ENCODE measurements at regions of chr21 and their contacts with region 1.

Region 1: GRCh38 chr21:15586752-15587445 is 142.9 kb upstream of the USP25 start:
- DNase-seq: no peak
- ATAC-seq: no peak
- H3K4me3 ChIP-seq: no peak overlapping the region
- H3K27ac ChIP-seq: no peak overlapping the region
- H3K4me1 ChIP-seq: no peaks in the 10 kb centered on the region
- H3K27me3 ChIP-seq: peaks cover 0 to 5% (median 0%) of the 10 kb centered on the region in 9 donors
- CTCF ChIP-seq: no peak
- POLR2A ChIP-seq: no peak

Region 2: DNA sequence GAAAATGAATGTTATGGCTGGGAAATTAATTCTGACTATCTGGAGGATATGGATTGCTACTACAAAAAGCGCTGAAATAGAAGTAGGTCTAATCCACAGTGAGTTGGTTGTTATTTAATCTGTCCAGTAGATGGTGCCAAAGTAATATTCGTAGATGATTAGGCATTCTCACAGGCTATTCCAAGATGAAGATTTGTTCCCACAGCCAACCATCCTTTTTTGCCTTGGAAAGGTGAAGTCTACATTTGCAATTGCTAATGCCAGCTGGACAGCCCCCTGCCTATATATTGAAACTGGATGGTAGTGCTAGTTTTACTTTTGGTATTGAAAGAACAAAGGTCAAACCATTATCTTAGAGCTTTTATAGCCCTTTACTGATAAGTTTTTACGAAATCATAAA is 1327.2 kb before region 1 on chr21:
- intact Hi-C with region 1: loop called (anchors 1 to 10 kb)
- DNase-seq: no peak
- ATAC-seq: peak in 3 of 4 donors; percentile 53 to 70 (median 62)
- H3K4me3 ChIP-seq: no peak overlapping the region
- H3K27ac ChIP-seq: no peak overlapping the region
- H3K4me1 ChIP-seq: no peaks in the 10 kb centered on the region
- H3K27me3 ChIP-seq: peaks cover 0 to 6% (median 0%) of the 10 kb centered on the region in 9 donors
- CTCF ChIP-seq: peak; percentile 37 to 73 (median 53)
- POLR2A ChIP-seq: no peak

Region 3: DNA sequence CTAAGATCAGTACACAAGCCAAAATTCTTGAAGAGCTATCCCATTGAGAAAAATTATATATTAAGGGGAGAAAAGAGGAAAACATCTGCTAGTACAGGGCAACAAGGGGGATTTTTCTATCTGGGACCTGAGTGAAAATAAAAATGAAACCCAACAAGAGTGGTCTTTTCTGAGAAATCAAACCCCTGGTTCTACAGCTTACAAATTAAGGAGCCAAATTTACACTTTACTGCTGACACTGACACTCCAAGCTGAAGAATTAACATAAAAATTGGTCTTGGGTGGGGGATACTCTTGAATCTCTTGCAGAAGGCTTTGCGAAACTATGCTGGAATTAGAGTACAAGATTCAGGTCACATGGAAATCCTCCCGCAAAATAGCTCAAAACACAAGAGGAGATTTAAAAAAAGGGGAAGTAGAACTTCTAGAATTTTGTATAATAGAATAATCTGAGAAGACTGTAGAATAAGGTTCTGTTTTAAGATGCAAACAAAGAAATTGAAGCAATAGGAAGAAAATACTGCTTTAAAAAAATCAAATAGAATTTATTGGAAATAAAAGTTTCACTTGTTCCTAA is 1171.9 kb before region 1 on chr21:
- intact Hi-C with region 1: loop called in 1 of 10 experiments (anchors 10 kb)
- DNase-seq: no peak
- ATAC-seq: no peak
- H3K4me3 ChIP-seq: no peak overlapping the region
- H3K27ac ChIP-seq: no peak overlapping the region
- H3K4me1 ChIP-seq: no peaks in the 10 kb centered on the region
- H3K27me3 ChIP-seq: no peaks in the 10 kb centered on the region
- CTCF ChIP-seq: no peak
- POLR2A ChIP-seq: no peak

Region 4: GRCh38 chr21:15462092-15462491 is 124.8 kb before region 1 on chr21:
- intact Hi-C with region 1: no loop called
- DNase-seq: no peak
- ATAC-seq: no peak
- H3K4me3 ChIP-seq: no peak overlapping the region
- H3K27ac ChIP-seq: no peak overlapping the region
- H3K4me1 ChIP-seq: no peaks in the 10 kb centered on the region
- H3K27me3 ChIP-seq: no peaks in the 10 kb centered on the region
- CTCF ChIP-seq: no peak
- POLR2A ChIP-seq: no peak

Region 5: GRCh38 chr21:15692711-15693110 is 105.8 kb after region 1 on chr21:
- intact Hi-C with region 1: no loop called
- DNase-seq: no peak
- ATAC-seq: no peak
- H3K4me3 ChIP-seq: no peak overlapping the region
- H3K27ac ChIP-seq: no peak overlapping the region
- H3K4me1 ChIP-seq: peaks cover 0 to 19% (median 0%) of the 10 kb centered on the region in 12 donors
- H3K27me3 ChIP-seq: no peaks in the 10 kb centered on the region
- CTCF ChIP-seq: no peak
- POLR2A ChIP-seq: no peak

Region 6: GRCh38 chr21:16667395-16667794 is 1080.5 kb after region 1 on chr21:
- intact Hi-C with region 1: no loop called
- DNase-seq: no peak
- ATAC-seq: no peak
- H3K4me3 ChIP-seq: no peak overlapping the region
- H3K27ac ChIP-seq: no peak overlapping the region
- H3K4me1 ChIP-seq: peaks cover 0 to 6% (median 0%) of the 10 kb centered on the region in 12 donors
- H3K27me3 ChIP-seq: no peaks in the 10 kb centered on the region
- CTCF ChIP-seq: no peak
- POLR2A ChIP-seq: no peak